ENCODE measurements at regions of chr17 and their contacts with region 1.

Region 1: DNA sequence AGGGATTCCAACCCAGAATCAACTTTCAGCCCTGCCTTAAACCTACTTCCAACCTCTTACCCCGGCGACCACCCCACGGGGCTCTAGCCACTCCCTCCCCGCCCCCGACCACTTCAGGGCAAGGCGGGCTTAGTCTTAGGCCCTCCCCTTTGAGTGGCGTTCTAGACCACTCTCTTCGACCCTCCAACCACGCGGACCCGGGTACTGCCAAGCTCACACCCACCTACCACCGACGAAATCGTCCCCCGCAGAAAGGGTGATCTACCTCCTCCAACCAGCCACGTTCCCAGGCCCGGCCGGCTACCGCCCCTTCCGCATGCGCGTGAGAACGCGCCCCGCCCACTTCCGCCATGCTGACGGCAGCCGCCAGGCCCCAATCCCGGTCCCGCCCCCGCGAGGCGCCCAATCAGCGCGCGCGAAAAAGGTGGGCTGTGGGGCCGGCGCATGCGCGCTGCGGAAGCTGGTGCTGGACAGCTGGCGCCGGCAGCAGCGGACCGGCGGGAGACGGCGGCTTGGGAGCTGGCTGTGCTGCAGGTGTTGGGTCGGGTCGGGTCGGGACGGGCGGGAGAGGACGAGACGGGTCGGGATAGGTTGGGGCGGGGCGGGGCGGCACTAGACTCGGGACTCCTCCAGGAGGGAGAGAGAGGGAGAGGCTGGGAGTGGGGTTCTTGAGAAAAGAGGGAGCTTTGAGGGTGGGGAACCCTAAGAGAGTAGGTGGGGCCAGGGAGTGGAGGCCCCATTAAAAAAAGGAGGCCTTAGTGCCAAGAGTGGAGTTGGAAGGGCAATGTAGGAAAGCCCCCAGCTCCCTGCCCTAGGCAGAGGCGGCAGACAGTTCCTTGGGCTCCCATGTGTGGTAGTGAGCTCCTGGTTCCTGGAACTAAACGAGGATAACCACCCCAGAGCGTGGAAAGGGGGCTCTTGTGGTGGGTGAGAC is at the start of gene NAT9:
- DNase-seq: peak; percentile 95
- H3K4me3 Mint-ChIP-seq: peak within 1 kb of the TSS; percentile 100
- H3K27ac Mint-ChIP-seq: peak within 1 kb of the TSS; percentile 98
- H3K4me1 Mint-ChIP-seq: peaks cover 16% of the 10 kb centered on the region
- H3K27me3 Mint-ChIP-seq: no peaks in the 10 kb centered on the region
- CTCF ChIP-seq: no peak
- total RNA-seq, gene NAT9: 58.1 and 64.8 TPM in 2 replicates

Region 2: GRCh38 chr17:74748529-74749365 is 27.6 kb before region 1 on chr17 and contains the start of gene NHERF1:
- CTCF ChIA-PET with region 1: interaction called, 74 read pairs
- POLR2A ChIA-PET with region 1: interaction called, 22 read pairs
- intact Hi-C with region 1: no loop called
- DNase-seq: peak; percentile 94
- H3K4me3 Mint-ChIP-seq: peak within 1 kb of the TSS; percentile 88
- H3K27ac Mint-ChIP-seq: peak within 1 kb of the TSS; percentile 57
- H3K4me1 Mint-ChIP-seq: peaks cover 34% of the 10 kb centered on the region
- H3K27me3 Mint-ChIP-seq: no peaks in the 10 kb centered on the region
- CTCF ChIP-seq: no peak
- total RNA-seq, gene NHERF1: 23.9 and 25.3 TPM in 2 replicates

Region 3: DNA sequence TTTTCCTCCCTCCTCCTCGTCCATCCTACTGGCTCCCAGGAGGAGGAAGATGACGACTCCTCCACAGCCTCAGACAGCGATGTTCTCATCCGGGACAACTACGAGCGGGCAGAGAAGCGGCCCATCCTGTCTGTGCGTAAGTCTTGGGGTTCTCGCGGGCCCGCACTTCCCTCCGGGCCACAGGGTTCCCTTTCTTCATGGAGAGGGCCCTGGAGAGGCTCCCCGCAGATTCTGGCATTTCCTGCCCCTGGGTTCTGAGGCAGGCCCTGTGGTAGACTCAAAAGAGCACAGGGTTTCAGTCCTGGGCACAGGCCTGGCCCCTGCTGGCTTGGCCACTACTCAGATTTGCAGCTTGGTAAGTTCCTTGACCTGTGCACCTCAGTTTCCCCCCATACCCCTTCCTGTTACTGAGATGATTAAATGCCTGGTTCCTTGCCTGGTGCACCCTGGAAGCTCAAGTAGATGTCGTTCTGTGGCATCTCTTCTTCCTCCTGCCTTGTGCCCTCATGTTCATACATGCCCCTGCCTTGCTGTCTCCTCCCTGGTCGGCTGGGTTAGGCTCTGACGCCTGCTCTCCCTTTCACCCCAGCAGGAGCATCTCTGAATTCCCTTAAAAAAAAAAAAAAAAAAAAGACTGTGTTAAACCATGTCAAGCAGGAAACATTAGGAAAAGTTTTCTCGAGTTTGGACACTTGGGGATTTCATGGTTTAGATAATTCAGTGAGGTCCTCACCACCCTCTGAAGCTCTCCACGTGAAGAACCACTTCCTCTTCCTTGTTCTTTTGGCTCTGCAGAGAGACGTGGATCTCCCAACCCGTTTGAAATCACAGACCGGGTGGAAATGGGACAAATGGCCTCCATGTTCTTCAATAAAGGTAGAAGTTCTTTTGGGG is 14.1 kb after region 1 on chr17:
- CTCF ChIA-PET with region 1: interaction called, 13 read pairs
- POLR2A ChIA-PET with region 1: interaction called, 4 read pairs
- intact Hi-C with region 1: no loop called
- DNase-seq: no peak
- H3K4me3 Mint-ChIP-seq: no peak overlapping the region
- H3K27ac Mint-ChIP-seq: no peak overlapping the region
- H3K4me1 Mint-ChIP-seq: peaks cover 6% of the 10 kb centered on the region
- H3K27me3 Mint-ChIP-seq: no peaks in the 10 kb centered on the region
- CTCF ChIP-seq: no peak

Region 4: DNA sequence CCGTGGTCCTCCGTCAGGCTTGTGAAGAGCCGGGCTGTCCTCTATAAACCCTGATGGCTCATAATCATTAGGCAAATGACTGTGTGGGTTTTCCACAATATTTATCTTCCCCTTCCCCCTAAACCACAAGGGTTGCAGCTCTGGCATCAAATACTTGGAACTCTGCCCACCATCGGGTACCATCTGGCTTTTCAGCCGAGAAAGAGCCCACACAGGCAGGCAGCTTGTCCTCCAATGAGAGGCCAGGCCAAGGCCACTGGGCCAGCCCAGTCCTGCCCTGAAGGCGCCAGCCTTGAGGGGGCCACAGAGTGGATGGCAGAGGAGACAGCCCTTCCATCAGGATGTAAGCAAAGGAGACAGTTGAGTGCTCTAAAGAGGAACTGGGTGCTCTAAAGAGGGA is 31.6 kb after region 1 on chr17:
- CTCF ChIA-PET with region 1: no interaction called
- POLR2A ChIA-PET with region 1: no interaction called
- intact Hi-C with region 1: no loop called
- DNase-seq: no peak
- H3K4me3 Mint-ChIP-seq: no peak overlapping the region
- H3K27ac Mint-ChIP-seq: no peak overlapping the region
- H3K4me1 Mint-ChIP-seq: no peaks in the 10 kb centered on the region
- H3K27me3 Mint-ChIP-seq: no peaks in the 10 kb centered on the region
- CTCF ChIP-seq: no peak

Measured in MCF 10A (cell line).